Right ventricle myocardium inferior (tissue), 1 donor: ENCODE measurements at regions of chr2 and their contacts with region 1.

Region 1: GRCh38 chr2:127106951-127107621 is at the start of gene BIN1:
- DNase-seq: peak; percentile 94
- ATAC-seq: peak; percentile 93
- total RNA-seq, gene BIN1: 17.9 TPM

Region 2: DNA sequence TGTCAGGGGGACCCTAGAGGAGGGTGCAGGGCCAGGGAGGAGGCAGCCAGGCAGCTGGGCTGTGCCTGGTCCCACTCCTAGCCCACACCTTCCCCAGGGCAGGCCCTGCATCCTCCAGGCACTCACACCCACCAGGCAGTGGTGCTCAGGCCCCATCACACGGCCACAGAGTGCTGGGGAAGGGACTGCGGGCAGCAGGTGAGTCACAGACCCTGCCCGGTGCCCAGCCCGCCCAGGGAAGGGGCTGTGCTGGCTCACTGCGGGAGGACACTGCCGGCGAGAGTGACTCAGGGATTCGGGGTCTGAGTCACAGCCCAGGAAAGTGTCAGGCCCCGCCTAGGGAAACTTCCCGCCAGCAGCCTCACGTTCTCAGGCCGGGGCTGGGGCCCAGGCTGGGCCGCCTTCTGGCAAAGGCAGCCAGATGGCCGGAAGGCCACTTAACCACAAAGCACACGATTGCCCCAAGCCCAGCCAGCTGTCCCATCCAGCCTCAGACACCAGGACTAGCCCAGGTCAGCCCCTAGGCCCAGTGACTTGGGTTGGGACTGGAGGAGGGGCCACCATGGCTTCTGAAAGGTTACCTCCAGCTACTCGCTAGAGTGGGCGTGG is 42.3 kb before region 1 on chr2:
- intact Hi-C with region 1: loop called (anchors 5 kb)
- DNase-seq: peak; percentile 94
- ATAC-seq: peak; percentile 86

Region 3: GRCh38 chr2:127293748-127294562 is 186.9 kb after region 1 on chr2 and contains the start of gene ERCC3:
- intact Hi-C with region 1: loop called (anchors 10 kb)
- DNase-seq: peak; percentile 95
- ATAC-seq: peak; percentile 97
- total RNA-seq, gene ERCC3: 21.2 TPM